Sigmoid colon (tissue), 7 donors: ENCODE measurements at regions of chr2 and their contacts with region 1.

Region 1: GRCh38 chr2:44167940-44168680 is 565 bp upstream of the PPM1B start:
- DNase-seq: peak; percentile 100
- H3K4me3 ChIP-seq: peak overlapping the region; percentile 43 to 87 (median 54)
- H3K27ac ChIP-seq: peak overlapping the region; percentile 95 to 96 (median 95)
- H3K4me1 ChIP-seq: peaks cover 0 to 25% (median 16%) of the 10 kb centered on the region in 4 donors
- H3K27me3 ChIP-seq: no peaks in the 10 kb centered on the region
- CTCF ChIP-seq: no peak
- EP300 ChIP-seq: no peak
- POLR2A ChIP-seq: no peak

Region 2: GRCh38 chr2:43995733-43996533 is 172.2 kb before region 1 on chr2 and contains the start of gene LRPPRC:
- intact Hi-C with region 1: loop called (anchors 2 kb)
- DNase-seq: peak; percentile 98
- H3K4me3 ChIP-seq: peak within 1 kb of the TSS; percentile 81 to 100 (median 98)
- H3K27ac ChIP-seq: peak within 1 kb of the TSS; percentile 85 to 90 (median 88)
- H3K4me1 ChIP-seq: peaks cover 0 to 31% (median 25%) of the 10 kb centered on the region in 4 donors
- H3K27me3 ChIP-seq: no peaks in the 10 kb centered on the region
- CTCF ChIP-seq: no peak
- EP300 ChIP-seq: peak in 1 of 4 donors; percentile 35
- POLR2A ChIP-seq: peak; percentile 45 to 70
- total RNA-seq, gene LRPPRC: 49.7 to 65.7 (median 55.8) TPM

Region 3: GRCh38 chr2:44087036-44087713 is 80.9 kb before region 1 on chr2:
- intact Hi-C with region 1: loop called (anchors 1 kb)
- DNase-seq: peak; percentile 90
- H3K4me3 ChIP-seq: peak overlapping the region; percentile 13 to 45 (median 36)
- H3K27ac ChIP-seq: peak overlapping the region; percentile 53 to 74 (median 68)
- H3K4me1 ChIP-seq: peaks cover 0 to 15% (median 9%) of the 10 kb centered on the region in 4 donors
- H3K27me3 ChIP-seq: no peaks in the 10 kb centered on the region
- CTCF ChIP-seq: peak; percentile 74 to 95 (median 90)
- EP300 ChIP-seq: no peak
- POLR2A ChIP-seq: no peak

Region 4: DNA sequence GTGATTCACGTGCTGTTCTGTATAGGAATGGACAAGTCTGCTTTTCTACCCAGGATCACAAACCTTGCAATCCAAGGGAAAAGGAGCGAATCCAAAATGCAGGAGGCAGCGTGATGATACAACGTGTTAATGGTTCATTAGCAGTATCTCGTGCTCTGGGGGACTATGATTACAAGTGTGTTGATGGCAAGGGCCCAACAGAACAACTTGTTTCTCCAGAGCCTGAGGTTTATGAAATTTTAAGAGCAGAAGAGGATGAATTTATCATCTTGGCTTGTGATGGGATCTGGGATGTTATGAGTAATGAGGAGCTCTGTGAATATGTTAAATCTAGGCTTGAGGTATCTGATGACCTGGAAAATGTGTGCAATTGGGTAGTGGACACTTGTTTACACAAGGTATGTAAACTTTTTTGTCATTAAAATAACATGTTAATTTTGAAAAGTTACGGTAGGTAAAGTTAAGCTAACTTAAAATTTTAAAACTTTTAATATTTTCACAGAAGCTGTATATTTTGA is 33.6 kb after region 1 on chr2:
- intact Hi-C with region 1: no loop called
- DNase-seq: no peak
- H3K4me3 ChIP-seq: no peak overlapping the region
- H3K27ac ChIP-seq: no peak overlapping the region
- H3K4me1 ChIP-seq: peaks cover 0 to 13% (median 6%) of the 10 kb centered on the region in 4 donors
- H3K27me3 ChIP-seq: no peaks in the 10 kb centered on the region
- CTCF ChIP-seq: no peak
- EP300 ChIP-seq: no peak
- POLR2A ChIP-seq: no peak

Region 5: GRCh38 chr2:44233450-44234128 is 65.5 kb after region 1 on chr2:
- intact Hi-C with region 1: no loop called
- DNase-seq: no peak
- H3K4me3 ChIP-seq: no peak overlapping the region
- H3K27ac ChIP-seq: no peak overlapping the region
- H3K4me1 ChIP-seq: peaks cover 0 to 8% (median 6%) of the 10 kb centered on the region in 4 donors
- H3K27me3 ChIP-seq: no peaks in the 10 kb centered on the region
- CTCF ChIP-seq: no peak
- EP300 ChIP-seq: no peak
- POLR2A ChIP-seq: no peak

Region 6: GRCh38 chr2:44244129-44244871 is 76.2 kb after region 1 on chr2:
- intact Hi-C with region 1: loop called (anchors 5 kb)
- DNase-seq: peak; percentile 72
- H3K4me3 ChIP-seq: peak overlapping the region; percentile 12 to 44 (median 31)
- H3K27ac ChIP-seq: peak overlapping the region in 1 of 4 donors; percentile 22
- H3K4me1 ChIP-seq: peaks cover 0 to 9% (median 5%) of the 10 kb centered on the region in 4 donors
- H3K27me3 ChIP-seq: no peaks in the 10 kb centered on the region
- CTCF ChIP-seq: peak in 3 of 4 experiments; percentile 26 to 59 (median 29)
- EP300 ChIP-seq: no peak
- POLR2A ChIP-seq: no peak